Panc1 (cell line): ENCODE measurements at regions of chr13 and their contacts with region 1.

Region 1: DNA sequence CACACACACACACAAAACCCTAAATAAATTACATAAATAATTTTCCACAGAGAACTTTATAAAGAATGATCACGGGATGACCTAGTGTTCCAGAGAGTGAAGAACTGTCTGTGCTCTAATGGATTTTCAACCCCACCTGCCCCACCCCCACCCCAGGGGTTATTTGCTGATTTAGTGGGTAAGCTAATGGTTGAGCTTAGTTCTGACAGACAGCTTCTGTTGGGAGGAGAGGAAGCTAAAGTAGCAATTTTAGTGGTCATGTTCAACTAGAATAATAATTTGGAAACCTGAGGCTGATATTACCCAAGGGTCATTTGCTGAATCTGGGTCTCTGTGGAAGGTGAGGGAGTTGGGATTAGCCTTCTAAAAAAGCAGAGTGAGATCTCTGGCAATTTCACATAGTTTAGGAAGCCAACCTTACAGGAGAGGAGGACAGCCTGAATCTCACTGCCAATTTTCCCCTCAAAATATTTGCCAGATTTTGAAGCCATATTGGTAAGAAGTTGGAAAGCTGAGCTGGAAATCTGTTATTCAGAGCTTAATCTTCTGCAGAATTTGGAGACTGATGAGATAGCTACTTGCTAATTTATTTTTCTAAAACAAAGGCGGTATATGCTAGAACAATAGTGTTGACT is 68.7 kb downstream of the POSTN start:
- DNase-seq: no peak
- ATAC-seq: no peak
- H3K4me3 ChIP-seq: no peak overlapping the region
- H3K27ac ChIP-seq: no peak overlapping the region
- H3K4me1 ChIP-seq: no peaks in the 10 kb centered on the region
- H3K27me3 ChIP-seq: no peaks in the 10 kb centered on the region
- CTCF ChIP-seq: no peak

Region 2: GRCh38 chr13:36639610-36640009 is 890.3 kb before region 1 on chr13:
- CTCF ChIA-PET with region 1: no interaction called
- POLR2A ChIA-PET with region 1: no interaction called
- in situ Hi-C with region 1: no loop called
- intact Hi-C with region 1: no loop called
- DNase-seq: no peak
- ATAC-seq: no peak
- H3K4me3 ChIP-seq: no peak overlapping the region
- H3K27ac ChIP-seq: no peak overlapping the region
- H3K4me1 ChIP-seq: no peaks in the 10 kb centered on the region
- H3K27me3 ChIP-seq: no peaks in the 10 kb centered on the region
- CTCF ChIP-seq: no peak

Region 3: DNA sequence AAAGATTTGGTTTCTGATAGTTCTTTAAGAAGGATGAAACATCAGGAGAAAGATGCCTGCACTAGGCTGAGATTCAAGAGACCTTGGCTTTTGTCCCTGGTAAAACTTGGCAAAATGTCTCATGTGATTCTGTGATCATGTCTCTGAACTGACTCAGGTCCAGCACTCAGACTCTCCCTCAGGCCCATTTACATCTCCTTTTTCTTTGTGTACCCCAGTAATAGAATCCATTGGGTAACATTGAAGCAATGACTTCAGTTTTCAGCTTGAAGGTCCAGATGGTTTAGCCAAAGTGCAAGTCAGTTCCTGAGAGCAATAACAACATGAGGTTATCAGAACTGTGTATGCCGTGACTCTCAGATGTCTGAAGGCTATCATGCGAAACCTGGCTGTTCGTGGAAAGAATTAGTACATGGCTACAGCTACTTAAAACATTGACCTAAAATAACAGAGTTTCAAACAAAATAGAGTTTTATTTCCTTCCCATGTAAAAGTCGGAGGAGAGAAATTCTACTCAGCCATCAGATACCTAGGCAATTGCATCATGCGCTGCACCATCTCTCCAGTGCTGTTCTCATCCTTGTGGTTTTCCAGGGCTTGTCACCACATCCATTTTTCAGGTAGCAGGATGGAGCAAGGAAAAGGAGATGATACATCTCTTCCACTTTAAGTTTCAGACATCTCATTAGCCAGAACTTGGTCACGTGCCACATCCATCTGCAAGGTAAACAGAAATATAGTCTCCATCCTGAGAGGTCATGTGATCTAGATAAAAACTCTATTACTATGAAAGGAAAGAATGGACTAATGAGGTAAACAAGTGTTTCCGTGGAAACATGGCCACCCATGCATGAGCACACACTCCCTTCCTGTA is 48.6 kb before region 1 on chr13:
- CTCF ChIA-PET with region 1: interaction called, 11 read pairs
- POLR2A ChIA-PET with region 1: no interaction called
- in situ Hi-C with region 1: no loop called
- intact Hi-C with region 1: no loop called
- DNase-seq: no peak
- ATAC-seq: no peak
- H3K4me3 ChIP-seq: no peak overlapping the region
- H3K27ac ChIP-seq: no peak overlapping the region
- H3K4me1 ChIP-seq: no peaks in the 10 kb centered on the region
- H3K27me3 ChIP-seq: no peaks in the 10 kb centered on the region
- CTCF ChIP-seq: no peak